HepG2 (cell line): ENCODE measurements at regions of chr20 and their contacts with region 1.

Region 1: GRCh38 chr20:49982346-49983122 is at the start of gene SNAI1:
- DNase-seq: peak; percentile 86
- ATAC-seq: peak; percentile 83
- H3K4me3 ChIP-seq: peak within 1 kb of the TSS; percentile 70 to 93 (median 72)
- H3K27ac ChIP-seq: peak within 1 kb of the TSS; percentile 53
- H3K4me1 ChIP-seq: peaks cover 80% of the 10 kb centered on the region
- H3K27me3 ChIP-seq: peaks cover 5 to 29% of the 10 kb centered on the region in 2 experiments
- CTCF ChIP-seq: peak; percentile 78
- EP300 ChIP-seq: 0 out of 4 replicates have a peak, but pooled peaks have one; percentile 1 to 19
- POLR2A ChIP-seq: peak; percentile 99
- RAD21 ChIP-seq: peak; percentile 99
- total RNA-seq, gene SNAI1: 1.3 and 1.4 TPM in 2 replicates

Region 2: DNA sequence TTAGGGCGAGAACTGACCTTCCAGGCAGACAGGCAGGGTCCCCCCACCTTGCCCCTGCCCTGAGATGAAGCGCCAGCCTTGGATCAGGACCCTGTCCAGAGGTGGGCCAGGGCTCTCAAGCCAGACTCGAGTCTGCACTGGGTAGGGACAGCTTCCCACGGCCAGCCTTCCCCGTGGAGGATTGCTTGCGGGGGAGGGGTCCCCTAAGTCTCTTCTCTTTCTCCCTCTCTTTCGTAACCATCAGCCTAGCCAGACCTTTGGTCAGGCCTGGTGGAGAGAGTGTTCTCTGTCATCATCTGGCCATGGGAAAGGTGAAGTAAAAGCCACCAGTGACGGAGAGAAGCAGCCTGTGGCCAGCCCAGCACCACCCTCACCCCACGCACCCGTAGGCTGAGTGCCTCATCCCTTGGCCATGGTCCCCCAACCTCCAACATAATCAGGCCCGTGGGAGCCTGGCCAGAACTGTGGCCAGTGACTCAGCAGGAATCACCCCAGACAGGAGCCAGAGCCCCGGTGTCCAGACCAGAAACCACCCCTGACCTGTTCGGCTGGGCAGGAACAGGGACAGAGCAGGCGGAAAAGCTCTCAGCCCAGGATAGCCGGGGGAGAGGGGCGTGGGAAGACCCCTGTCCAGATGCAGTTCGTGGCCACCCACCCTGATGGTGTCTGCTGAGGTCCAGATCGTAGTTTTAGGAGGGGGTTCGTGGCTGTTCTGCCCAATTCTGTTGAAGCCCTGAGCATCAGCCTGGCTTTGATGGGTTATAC is 47.3 kb after region 1 on chr20:
- CTCF ChIA-PET with region 1: interaction called, 3 read pairs
- POLR2A ChIA-PET with region 1: interaction called, 3 read pairs
- in situ Hi-C with region 1: no loop called
- intact Hi-C with region 1: loop called (anchors 5 kb)
- DNase-seq: peak; percentile 80
- ATAC-seq: peak; percentile 69
- H3K4me3 ChIP-seq: peak overlapping the region; percentile 46 to 74 (median 48)
- H3K27ac ChIP-seq: peak overlapping the region; percentile 55
- H3K4me1 ChIP-seq: peaks cover 91% of the 10 kb centered on the region
- H3K27me3 ChIP-seq: peaks cover 0 to 3% of the 10 kb centered on the region in 2 experiments; a peak in 1 of 5 replicates
- CTCF ChIP-seq: no peak
- EP300 ChIP-seq: no peak
- POLR2A ChIP-seq: peak; percentile 64 to 69; a peak in 3 of 4 replicates
- RAD21 ChIP-seq: peak; percentile 11; the same call in 1 of the 2 replicates

Region 3: GRCh38 chr20:50070991-50071888 is 88.7 kb after region 1 on chr20:
- CTCF ChIA-PET with region 1: interaction called, 163 read pairs
- POLR2A ChIA-PET with region 1: interaction called, 58 read pairs
- in situ Hi-C with region 1: loop called (anchors 5 kb)
- intact Hi-C with region 1: loop called (anchors 1 kb)
- DNase-seq: peak; percentile 83
- ATAC-seq: peak; percentile 81
- H3K4me3 ChIP-seq: peak overlapping the region; percentile 13 to 67 (median 18); a peak in 5 of 6 replicates
- H3K27ac ChIP-seq: no peak overlapping the region
- H3K4me1 ChIP-seq: peaks cover 72% of the 10 kb centered on the region
- H3K27me3 ChIP-seq: peaks cover 0 to 14% of the 10 kb centered on the region in 2 experiments; a peak in 1 of 5 replicates
- CTCF ChIP-seq: peak; percentile 100
- EP300 ChIP-seq: 0 out of 4 replicates have a peak, but pooled peaks of 1 of the 2 experiments have one; percentile 23
- POLR2A ChIP-seq: no peak
- RAD21 ChIP-seq: peak; percentile 100

Region 4: GRCh38 chr20:50077818-50078604 is 95.5 kb after region 1 on chr20:
- CTCF ChIA-PET with region 1: interaction called, 163 read pairs
- POLR2A ChIA-PET with region 1: interaction called, 4 read pairs
- in situ Hi-C with region 1: loop called (anchors 5 kb)
- intact Hi-C with region 1: no loop called
- DNase-seq: no peak
- ATAC-seq: peak; percentile 6
- H3K4me3 ChIP-seq: no peak overlapping the region
- H3K27ac ChIP-seq: no peak overlapping the region
- H3K4me1 ChIP-seq: peaks cover 56% of the 10 kb centered on the region
- H3K27me3 ChIP-seq: no peaks in the 10 kb centered on the region
- CTCF ChIP-seq: no peak
- EP300 ChIP-seq: no peak
- POLR2A ChIP-seq: no peak
- RAD21 ChIP-seq: no peak

Region 5: DNA sequence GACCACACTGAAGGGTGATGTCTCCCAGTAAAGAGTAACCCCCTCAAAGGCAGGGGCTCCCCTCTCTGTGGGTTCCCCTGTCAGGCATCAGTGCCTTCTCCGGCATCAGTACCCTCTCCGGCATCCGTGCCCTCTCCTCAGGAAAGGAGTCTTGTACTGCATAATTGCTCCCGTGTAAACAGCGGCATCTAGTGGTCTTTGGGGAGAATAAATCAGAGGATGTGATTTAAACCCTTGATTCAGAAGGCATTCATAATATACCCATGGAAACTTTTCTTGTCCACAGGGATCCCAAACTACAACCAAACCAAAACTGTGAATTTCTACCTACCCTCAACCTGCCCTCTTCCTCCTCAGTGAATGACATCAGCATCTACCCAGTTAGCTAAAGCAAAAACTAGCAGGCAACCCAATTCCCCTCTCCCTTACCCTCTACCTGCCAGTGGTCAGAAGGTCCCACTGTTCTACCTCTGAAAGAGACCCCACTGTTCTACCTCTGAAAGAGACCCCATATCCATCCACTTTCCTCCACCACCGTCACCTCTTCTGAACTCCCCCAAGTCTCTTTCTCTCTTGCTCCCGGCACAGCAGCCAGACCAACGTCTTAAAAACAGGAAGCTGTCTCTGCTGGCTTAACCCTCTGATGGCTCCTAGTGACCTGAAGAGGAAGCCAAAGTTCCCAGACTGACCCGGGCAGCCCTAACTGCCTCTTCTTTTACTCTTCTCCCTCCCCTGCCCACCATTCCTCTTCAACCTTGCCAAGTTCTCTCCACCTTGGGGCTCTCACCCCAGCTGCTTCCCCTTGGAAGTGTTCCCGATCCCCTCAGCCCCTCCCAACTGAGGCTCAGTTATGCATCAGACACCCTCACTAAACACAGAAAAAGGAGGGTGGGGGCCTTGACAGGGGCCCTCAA is 103.2 kb after region 1 on chr20:
- CTCF ChIA-PET with region 1: interaction called, 29 read pairs
- POLR2A ChIA-PET with region 1: no interaction called
- in situ Hi-C with region 1: no loop called
- intact Hi-C with region 1: loop called (anchors 1 kb)
- DNase-seq: peak; percentile 82
- ATAC-seq: peak; percentile 87
- H3K4me3 ChIP-seq: no peak overlapping the region
- H3K27ac ChIP-seq: no peak overlapping the region
- H3K4me1 ChIP-seq: peaks cover 12% of the 10 kb centered on the region
- H3K27me3 ChIP-seq: no peaks in the 10 kb centered on the region
- CTCF ChIP-seq: peak; percentile 94
- EP300 ChIP-seq: no peak
- POLR2A ChIP-seq: no peak
- RAD21 ChIP-seq: peak; percentile 87

Region 6: DNA sequence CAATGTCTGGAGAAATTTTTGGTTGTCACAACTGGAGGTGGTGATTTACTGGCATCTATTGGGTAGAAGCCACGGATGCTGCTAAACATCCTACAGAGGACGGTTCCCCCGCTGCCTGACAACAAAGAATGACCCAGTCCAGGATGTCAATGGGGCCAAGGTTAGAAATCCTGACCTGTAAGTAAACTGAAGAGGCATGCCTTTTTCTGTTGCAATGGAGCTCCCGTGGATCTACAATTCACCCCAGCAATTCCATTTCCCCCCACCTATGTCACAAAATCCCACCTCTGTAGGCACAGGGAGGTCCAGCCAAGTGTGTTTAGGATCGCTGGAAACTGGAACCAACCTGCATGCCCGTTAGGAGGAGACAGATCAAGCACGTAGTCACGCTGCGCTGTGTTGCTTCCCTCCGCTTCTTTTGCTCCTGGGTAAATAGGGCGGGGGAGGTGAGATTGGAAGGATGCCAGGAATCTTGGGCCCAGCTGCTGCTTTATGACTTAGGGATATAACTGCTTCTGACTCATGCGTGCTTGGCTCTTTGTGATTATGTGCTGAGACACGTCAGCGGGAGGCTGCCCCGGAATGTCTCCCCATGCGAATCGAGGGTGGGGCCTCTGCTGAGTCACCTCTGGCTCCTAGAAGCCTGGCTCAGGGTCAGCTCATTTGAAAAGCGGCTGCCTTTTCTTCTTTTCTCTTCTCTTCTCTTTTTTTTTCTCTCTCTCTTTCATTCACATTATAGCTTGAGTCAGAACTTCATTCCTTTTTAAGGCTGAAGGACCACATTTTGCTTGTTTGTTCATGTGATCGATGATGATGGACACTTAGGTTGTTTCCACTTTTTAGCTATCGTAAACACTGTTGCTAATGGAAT is 183.4 kb after region 1 on chr20:
- CTCF ChIA-PET with region 1: interaction called, 6 read pairs
- POLR2A ChIA-PET with region 1: interaction called, 5 read pairs
- in situ Hi-C with region 1: loop called (anchors 5 kb)
- intact Hi-C with region 1: loop called (anchors 2 kb)
- DNase-seq: peak; percentile 100
- ATAC-seq: peak; percentile 92
- H3K4me3 ChIP-seq: peak overlapping the region; percentile 45 to 63 (median 51)
- H3K27ac ChIP-seq: peak overlapping the region; percentile 96
- H3K4me1 ChIP-seq: peaks cover 80% of the 10 kb centered on the region
- H3K27me3 ChIP-seq: no peaks in the 10 kb centered on the region
- CTCF ChIP-seq: peak; percentile 39; the same call in 1 of the 2 replicates
- EP300 ChIP-seq: peak in 1 of 2 experiments; percentile 83
- POLR2A ChIP-seq: peak; percentile 85
- RAD21 ChIP-seq: peak; percentile 49; the same call in 1 of the 2 replicates

Region 7: DNA sequence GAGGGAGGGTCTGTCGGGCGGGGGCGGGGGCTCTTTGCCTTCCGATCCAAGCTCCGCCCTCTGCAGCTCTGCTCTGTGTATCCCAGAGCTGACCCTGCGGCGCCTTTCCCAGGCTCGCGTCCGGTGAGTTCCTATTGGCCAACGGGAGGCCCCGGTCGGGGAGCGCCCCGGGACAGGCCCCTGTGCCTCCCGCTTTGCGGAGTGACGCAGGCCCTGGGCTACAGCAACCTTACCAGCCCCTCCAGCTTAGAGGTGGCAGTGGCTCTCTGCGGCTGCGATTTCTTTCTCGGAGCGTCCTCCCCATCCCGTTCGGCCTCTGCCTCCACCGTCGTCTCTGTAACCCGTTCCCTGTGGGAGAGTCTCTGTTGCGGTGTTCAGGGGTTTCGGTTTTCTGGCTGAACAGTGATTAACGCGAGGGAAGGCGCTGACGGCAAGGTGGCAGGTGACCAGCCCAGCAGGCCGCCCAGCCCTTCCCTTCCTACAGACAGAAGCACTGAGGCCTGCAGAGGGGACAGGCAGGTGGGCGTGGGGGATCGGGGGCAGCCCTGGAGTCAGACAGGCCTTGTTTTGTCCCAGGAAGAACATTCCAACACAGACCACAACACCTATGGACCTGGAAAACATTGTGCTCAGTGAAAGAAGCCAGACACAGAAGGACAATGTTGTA is 189.9 kb after region 1 on chr20:
- CTCF ChIA-PET with region 1: interaction called, 6 read pairs
- POLR2A ChIA-PET with region 1: interaction called, 5 read pairs
- in situ Hi-C with region 1: loop called (anchors 5 kb)
- intact Hi-C with region 1: loop called (anchors 2 kb)
- DNase-seq: peak; percentile 97
- ATAC-seq: peak; percentile 96
- H3K4me3 ChIP-seq: peak overlapping the region; percentile 63 to 78 (median 64)
- H3K27ac ChIP-seq: peak overlapping the region; percentile 81
- H3K4me1 ChIP-seq: peaks cover 57% of the 10 kb centered on the region
- H3K27me3 ChIP-seq: no peaks in the 10 kb centered on the region; a peak in 1 of 5 replicates
- CTCF ChIP-seq: peak; percentile 44
- EP300 ChIP-seq: peak; percentile 45 to 58; a peak in 1 of 4 replicates
- POLR2A ChIP-seq: peak; percentile 95 to 96
- RAD21 ChIP-seq: peak; percentile 48